Stomach (tissue), 19 donors: ENCODE measurements at regions of chr3 and their contacts with region 1.

Region 1: DNA sequence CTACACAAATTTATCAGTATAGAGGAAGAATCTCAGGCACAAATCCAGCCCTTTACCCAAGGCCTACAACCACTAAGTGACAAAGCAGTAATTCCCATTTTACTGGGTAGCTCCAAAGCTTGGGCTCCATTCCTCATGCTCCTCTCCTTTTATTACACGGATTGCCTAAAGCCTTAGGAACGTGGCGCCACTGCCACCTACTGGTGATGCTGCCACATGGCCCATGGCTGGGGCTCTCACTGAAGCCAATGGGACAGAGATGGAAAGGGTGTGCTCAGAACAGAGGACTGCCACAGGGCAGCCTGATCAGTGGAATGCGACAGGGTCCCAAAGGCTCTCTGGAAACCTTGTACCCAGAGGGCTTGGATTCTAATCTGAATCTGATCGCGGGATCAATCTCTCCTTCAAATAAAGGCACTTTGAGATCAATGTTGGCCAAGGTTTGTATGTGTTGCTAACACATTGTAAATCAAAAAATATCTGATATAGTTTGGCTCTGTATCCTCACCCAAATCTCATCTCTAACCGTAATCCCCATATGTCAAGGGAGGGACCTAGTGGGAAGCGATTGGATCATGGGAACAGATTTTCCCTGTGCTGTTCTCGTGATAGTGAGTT is 33.5 kb upstream of the LYZL4 start:
- DNase-seq: peak; percentile 88 to 92
- H3K4me3 ChIP-seq: no peak overlapping the region
- H3K27ac ChIP-seq: no peak overlapping the region
- H3K4me1 ChIP-seq: no peaks in the 10 kb centered on the region
- H3K27me3 ChIP-seq: peaks cover 0 to 38% (median 0%) of the 10 kb centered on the region in 3 donors
- CTCF ChIP-seq: peak in 5 of 7 experiments; percentile 89 to 95 (median 91)
- EP300 ChIP-seq: no peak
- POLR2A ChIP-seq: no peak

Region 2: GRCh38 chr3:42229942-42230688 is 213.8 kb before region 1 on chr3:
- intact Hi-C with region 1: loop called (anchors 5 kb)
- DNase-seq: peak in 1 of 2 donors; percentile 70
- H3K4me3 ChIP-seq: peak overlapping the region in 1 of 4 donors; percentile 14
- H3K27ac ChIP-seq: no peak overlapping the region
- H3K4me1 ChIP-seq: peaks cover 0 to 19% (median 15%) of the 10 kb centered on the region in 4 donors
- H3K27me3 ChIP-seq: peaks cover 0 to 13% (median 0%) of the 10 kb centered on the region in 3 donors
- CTCF ChIP-seq: peak in 4 of 7 experiments; percentile 28 to 51 (median 40)
- EP300 ChIP-seq: no peak
- POLR2A ChIP-seq: no peak

Region 3: GRCh38 chr3:42256135-42256819 is 187.7 kb before region 1 on chr3:
- intact Hi-C with region 1: loop called (anchors 10 kb)
- DNase-seq: no peak
- H3K4me3 ChIP-seq: no peak overlapping the region
- H3K27ac ChIP-seq: no peak overlapping the region
- H3K4me1 ChIP-seq: peaks cover 0 to 5% (median 0%) of the 10 kb centered on the region in 4 donors
- H3K27me3 ChIP-seq: peaks cover 0 to 53% (median 5%) of the 10 kb centered on the region in 3 donors
- CTCF ChIP-seq: no peak
- EP300 ChIP-seq: no peak
- POLR2A ChIP-seq: no peak

Region 4: DNA sequence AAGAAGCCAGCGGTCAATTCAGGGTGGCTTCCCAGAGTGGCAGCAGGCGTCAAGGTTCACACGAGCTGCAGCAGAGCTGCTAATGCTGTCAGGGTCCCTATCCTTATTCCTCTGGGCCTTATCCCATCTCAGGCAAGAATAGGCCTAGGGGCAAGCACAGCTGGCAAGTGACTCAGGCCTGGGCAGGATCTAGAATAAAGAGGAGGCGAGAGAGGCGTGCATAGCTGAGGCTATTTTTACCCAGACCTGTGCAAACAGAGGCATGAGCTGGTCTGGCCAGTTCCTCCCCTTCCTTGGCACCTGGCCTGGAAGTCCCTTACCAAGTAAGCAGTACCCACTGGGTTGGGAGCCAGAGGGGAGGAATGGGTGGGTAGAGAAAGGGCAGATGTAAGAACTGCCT is 46.3 kb after region 1 on chr3:
- intact Hi-C with region 1: no loop called
- DNase-seq: peak; percentile 92 to 97
- H3K4me3 ChIP-seq: no peak overlapping the region
- H3K27ac ChIP-seq: peak overlapping the region; percentile 76 to 88 (median 78)
- H3K4me1 ChIP-seq: peaks cover 23 to 45% (median 38%) of the 10 kb centered on the region in 4 donors
- H3K27me3 ChIP-seq: no peaks in the 10 kb centered on the region
- CTCF ChIP-seq: no peak
- EP300 ChIP-seq: no peak
- POLR2A ChIP-seq: no peak

Region 5: DNA sequence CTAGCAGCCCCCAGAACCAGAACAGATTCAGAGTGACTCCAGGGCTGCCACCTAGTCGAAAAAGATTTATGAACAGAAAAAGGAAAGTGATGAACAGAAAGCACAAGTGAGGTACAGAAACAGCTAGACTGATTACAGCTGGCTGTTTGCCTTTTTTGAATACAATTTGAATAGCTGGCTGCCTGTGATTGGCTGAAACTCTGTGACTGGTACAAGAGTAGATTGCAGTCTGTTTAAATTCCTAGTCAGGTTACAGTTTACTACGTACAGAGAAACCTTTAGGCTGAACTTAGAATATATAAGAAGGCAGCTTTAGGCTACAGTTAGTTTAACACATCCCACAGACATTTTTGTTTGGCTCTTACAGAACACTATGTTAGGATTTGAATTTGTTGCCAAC is 319.1 kb after region 1 on chr3:
- intact Hi-C with region 1: no loop called
- DNase-seq: peak in 1 of 2 donors; percentile 48
- H3K4me3 ChIP-seq: no peak overlapping the region
- H3K27ac ChIP-seq: peak overlapping the region in 4 of 5 donors; percentile 0 to 52 (median 47)
- H3K4me1 ChIP-seq: peaks cover 0 to 42% (median 16%) of the 10 kb centered on the region in 4 donors
- H3K27me3 ChIP-seq: no peaks in the 10 kb centered on the region
- CTCF ChIP-seq: no peak
- EP300 ChIP-seq: no peak
- POLR2A ChIP-seq: no peak